K562 (cell line): ENCODE measurements at regions of chr1 and their contacts with region 1.

Region 1: GRCh38 chr1:118987468-118988185 is 516 bp downstream of the TBX15 start:
- DNase-seq: peak in 1 of 4 experiments; percentile 52
- ATAC-seq: peak; percentile 60
- H3K4me3 ChIP-seq: peak overlapping the region; percentile 29
- H3K27ac ChIP-seq: peak overlapping the region; percentile 42; the same call in 1 of the 3 replicates
- H3K4me1 ChIP-seq: peaks cover 0 to 23% of the 10 kb centered on the region in 2 experiments; a peak in 3 of 5 replicates
- H3K27me3 ChIP-seq: peaks cover 59 to 98% of the 10 kb centered on the region in 2 experiments
- CTCF ChIP-seq: no peak
- EP300 ChIP-seq: no peak
- POLR2A ChIP-seq: no peak
- RAD21 ChIP-seq: no peak

Region 2: DNA sequence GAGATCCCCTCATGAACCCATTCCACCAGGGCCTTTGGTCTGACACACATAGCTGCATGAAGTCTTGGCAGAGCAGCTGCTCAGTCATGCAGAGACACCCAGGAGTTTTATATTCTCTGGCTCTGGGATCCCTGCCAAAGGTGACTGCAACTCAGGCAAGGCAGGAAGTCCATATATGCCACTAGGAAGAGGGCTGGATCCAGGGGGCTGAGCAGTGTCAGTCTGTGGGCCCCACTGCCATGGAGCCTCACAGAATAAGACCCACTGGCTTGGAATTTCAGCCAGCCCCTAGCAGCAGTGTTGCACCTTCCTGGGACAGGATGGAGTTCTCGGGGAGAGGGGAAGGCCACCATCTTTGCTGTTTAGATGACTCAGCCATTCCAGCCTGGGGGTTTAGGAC is 199.2 kb before region 1 on chr1:
- CTCF ChIA-PET with region 1: no interaction called
- POLR2A ChIA-PET with region 1: no interaction called
- in situ Hi-C with region 1: no loop called
- intact Hi-C with region 1: no loop called
- DNase-seq: no peak
- ATAC-seq: no peak
- H3K4me3 ChIP-seq: no peak overlapping the region
- H3K27ac ChIP-seq: no peak overlapping the region
- H3K4me1 ChIP-seq: no peaks in the 10 kb centered on the region
- H3K27me3 ChIP-seq: no peaks in the 10 kb centered on the region
- CTCF ChIP-seq: no peak
- EP300 ChIP-seq: no peak
- POLR2A ChIP-seq: no peak
- RAD21 ChIP-seq: no peak

Region 3: DNA sequence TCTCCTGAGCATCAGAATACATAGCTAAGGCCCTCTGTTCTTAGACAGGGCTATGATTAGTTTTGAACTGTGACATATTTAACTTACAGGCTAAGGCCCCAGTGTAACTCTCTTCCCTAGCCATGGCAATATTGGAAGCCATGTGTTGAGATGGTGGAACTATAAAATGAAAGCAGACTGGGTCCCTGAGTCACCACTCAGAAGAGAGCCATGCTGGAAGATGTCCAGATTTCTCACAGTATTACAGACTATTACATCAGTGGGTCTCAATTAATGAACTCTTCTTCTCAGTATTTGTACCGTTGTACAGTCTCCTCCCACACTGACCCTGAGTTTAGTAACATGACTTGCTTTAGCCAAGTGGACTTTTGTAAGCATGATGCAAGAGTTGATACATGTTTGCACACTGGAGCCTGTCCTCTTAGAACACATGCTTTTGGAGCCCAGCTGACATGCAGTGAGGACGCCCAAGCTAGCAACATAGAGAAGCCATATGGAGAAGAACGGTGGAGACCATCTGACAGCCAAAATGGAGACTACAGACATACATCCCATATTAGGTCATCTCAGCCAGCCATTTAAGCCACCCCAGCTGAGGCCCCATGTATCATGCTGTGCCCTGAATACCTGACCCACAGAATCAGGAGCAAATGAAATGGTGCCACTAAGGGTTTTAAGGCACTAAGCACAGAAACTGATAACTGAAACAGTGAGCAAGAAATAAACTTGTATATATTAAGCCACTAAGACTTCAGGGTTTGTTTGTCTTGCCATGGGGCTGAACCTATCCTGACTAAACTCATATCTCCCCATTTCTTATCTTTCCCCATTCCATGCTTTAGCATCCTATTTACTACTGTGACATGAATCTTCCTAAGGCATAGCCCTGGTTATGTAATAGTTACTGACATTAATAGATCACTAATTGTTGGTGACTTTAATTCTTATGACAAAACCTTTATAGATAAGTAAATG is 23.9 kb before region 1 on chr1:
- CTCF ChIA-PET with region 1: no interaction called
- POLR2A ChIA-PET with region 1: no interaction called
- in situ Hi-C with region 1: no loop called
- intact Hi-C with region 1: loop called (anchors 2 kb)
- DNase-seq: peak in 1 of 4 experiments; percentile 55
- ATAC-seq: peak; percentile 89
- H3K4me3 ChIP-seq: no peak overlapping the region
- H3K27ac ChIP-seq: peak overlapping the region; percentile 50; the same call in 2 of the 3 replicates
- H3K4me1 ChIP-seq: peaks cover 0 to 17% of the 10 kb centered on the region in 2 experiments; a peak in 3 of 5 replicates
- H3K27me3 ChIP-seq: no peaks in the 10 kb centered on the region
- CTCF ChIP-seq: no peak
- EP300 ChIP-seq: peak; percentile 96
- POLR2A ChIP-seq: no peak
- RAD21 ChIP-seq: peak; percentile 35 to 36

Region 4: GRCh38 chr1:118970451-118970850 is 17.2 kb before region 1 on chr1:
- CTCF ChIA-PET with region 1: no interaction called
- POLR2A ChIA-PET with region 1: interaction called, 3 read pairs
- in situ Hi-C with region 1: no loop called
- intact Hi-C with region 1: loop called (anchors 2 kb)
- DNase-seq: no peak
- ATAC-seq: no peak
- H3K4me3 ChIP-seq: no peak overlapping the region
- H3K27ac ChIP-seq: no peak overlapping the region
- H3K4me1 ChIP-seq: no peaks in the 10 kb centered on the region; a peak in 1 of 5 replicates
- H3K27me3 ChIP-seq: no peaks in the 10 kb centered on the region
- CTCF ChIP-seq: no peak
- EP300 ChIP-seq: no peak
- POLR2A ChIP-seq: no peak
- RAD21 ChIP-seq: no peak

Region 5: DNA sequence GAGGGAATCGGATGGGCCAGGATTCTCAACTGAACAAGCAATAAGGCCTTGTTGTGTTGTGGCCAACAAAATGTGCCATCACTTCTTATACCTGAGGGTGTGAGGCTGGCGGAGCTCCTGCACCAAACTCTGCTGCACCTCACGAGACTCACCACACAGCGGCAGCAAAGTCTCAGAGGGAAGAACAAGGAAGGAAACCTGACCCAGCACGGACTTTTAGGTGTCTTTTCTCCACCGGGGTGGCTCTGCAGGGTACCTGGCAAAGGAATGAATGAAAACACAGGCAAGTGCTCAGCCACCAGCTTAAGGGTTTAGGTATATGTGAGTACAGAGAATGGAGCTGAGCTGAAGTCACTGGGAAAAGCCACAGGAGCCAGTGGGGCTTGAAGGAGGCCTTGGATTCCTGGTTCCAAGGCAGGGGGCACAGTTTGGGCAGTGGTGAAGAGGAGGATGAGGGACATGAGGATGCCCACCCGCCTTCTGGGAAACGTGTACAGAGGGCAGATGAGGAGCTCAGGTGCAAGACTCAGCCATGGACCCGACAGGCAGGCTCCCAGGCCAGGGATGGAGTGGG is 488.3 kb after region 1 on chr1:
- CTCF ChIA-PET with region 1: no interaction called
- POLR2A ChIA-PET with region 1: no interaction called
- in situ Hi-C with region 1: no loop called
- intact Hi-C with region 1: no loop called
- DNase-seq: peak; percentile 50 to 64 (median 60)
- ATAC-seq: peak; percentile 97
- H3K4me3 ChIP-seq: no peak overlapping the region
- H3K27ac ChIP-seq: no peak overlapping the region
- H3K4me1 ChIP-seq: no peaks in the 10 kb centered on the region
- H3K27me3 ChIP-seq: no peaks in the 10 kb centered on the region
- CTCF ChIP-seq: peak; percentile 69 to 79 (median 78)
- EP300 ChIP-seq: no peak
- POLR2A ChIP-seq: no peak
- RAD21 ChIP-seq: peak; percentile 37 to 59; a peak in 3 of 4 replicates